ENCODE measurements at regions of chr18 and their contacts with region 1.

Region 1: GRCh38 chr18:3593904-3594661 is 144.1 kb downstream of the TGIF1 start:
- DNase-seq: peak; percentile 91
- H3K4me3 ChIP-seq: peak overlapping the region; percentile 64
- CTCF ChIP-seq: peak; percentile 89

Region 2: GRCh38 chr18:3037423-3037915 is 556.6 kb before region 1 on chr18:
- CTCF ChIA-PET with region 1: no interaction called
- POLR2A ChIA-PET with region 1: no interaction called
- DNase-seq: no peak
- H3K4me3 ChIP-seq: no peak overlapping the region
- CTCF ChIP-seq: no peak

Region 3: DNA sequence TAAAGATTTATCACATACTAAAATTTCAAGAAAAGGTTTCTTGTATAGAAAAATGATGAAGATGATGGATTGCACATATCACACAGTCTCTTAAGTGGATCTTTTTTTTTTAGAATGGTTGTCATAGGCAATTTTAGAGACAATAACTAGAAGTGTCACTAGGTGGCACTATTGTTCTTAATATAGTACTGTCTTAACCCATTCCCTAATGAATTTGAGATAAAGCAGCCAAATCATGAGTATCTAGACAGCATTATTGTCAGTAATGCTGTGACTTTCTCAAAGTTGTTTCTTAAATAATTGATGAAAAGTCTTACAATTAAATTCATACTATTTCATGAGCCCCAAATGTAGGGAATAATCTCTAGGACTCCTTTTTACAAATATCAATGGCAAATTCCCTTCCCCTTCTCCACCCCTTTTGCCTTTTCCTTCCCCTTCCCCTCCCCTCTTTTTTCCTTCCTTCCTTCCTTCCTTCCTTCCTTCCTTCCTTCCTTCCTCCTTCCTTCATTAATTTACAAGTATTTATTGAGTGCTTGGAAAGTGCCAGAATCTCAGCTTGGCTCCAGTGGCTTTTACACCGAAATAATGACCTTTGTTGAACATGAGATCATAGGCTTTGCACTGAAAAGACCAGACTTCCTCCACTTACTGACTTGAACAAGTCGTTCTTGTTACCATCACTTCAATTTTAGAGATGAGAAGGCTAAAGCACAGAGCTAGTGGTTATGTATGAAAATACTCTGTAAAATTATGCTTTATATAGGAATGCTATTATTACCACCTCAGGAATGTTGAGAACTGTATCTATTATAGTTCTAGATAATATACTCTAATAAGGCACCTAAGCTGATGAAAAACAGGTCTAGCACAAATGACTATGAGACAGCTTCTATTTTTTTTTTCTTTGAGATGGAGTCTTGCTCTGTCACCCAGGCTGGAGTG is 312.4 kb before region 1 on chr18:
- CTCF ChIA-PET with region 1: interaction called, 18 read pairs
- POLR2A ChIA-PET with region 1: interaction called, 3 read pairs
- DNase-seq: no peak
- H3K4me3 ChIP-seq: no peak overlapping the region
- CTCF ChIP-seq: peak; percentile 31

Region 4: DNA sequence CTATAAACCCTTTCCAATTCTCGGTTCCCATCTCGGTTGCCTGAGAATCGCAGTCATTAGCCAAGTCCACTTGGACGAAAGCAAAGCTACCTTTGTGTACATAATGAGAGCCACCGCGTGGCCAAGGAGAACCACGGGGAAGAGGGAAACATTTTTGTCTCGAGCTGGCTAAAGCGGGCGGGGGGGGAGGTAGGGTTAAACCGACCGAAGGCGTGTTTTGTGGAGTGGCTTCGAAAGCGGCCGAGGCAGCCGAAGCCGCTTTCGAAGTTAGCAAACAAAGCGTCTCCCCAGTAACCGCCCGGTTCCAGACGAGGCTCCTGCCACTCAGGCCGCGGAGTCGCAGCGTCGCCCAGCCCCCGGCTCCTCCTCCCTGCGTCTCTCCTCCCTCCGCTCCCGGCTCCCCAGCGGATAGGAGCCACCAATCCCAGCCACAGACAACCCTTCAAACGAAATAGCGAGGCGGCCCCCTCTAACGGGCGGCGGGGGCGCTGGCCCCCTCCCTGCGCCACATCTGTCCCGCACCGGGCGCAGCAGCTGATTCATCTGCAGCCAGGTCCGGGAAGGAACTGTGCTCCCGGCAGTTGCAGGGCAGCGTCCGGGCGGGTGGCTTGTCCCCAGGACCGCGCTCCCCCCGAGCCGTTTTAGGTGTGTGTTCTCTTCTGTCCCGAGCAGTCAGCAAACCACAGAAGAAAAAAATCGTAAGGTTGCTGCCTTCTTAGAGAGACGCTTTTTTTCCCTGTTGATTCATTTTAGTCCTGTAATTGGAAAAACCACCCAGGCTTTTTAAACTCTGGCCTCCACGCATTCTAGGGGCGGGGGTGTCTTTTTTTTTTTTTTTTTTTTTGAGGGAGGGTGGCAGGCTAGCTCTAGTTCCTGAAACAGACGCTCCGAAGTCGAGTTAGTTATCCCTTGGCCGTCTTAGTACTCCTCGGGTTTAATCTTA is 145.9 kb before region 1 on chr18:
- CTCF ChIA-PET with region 1: interaction called, 78 read pairs
- POLR2A ChIA-PET with region 1: interaction called, 34 read pairs
- DNase-seq: no peak
- H3K4me3 ChIP-seq: peak overlapping the region; percentile 81
- CTCF ChIP-seq: peak; percentile 26

Region 5: GRCh38 chr18:3454365-3455089 is 139.6 kb before region 1 on chr18:
- CTCF ChIA-PET with region 1: interaction called, 78 read pairs
- POLR2A ChIA-PET with region 1: interaction called, 34 read pairs
- DNase-seq: no peak
- H3K4me3 ChIP-seq: peak overlapping the region; percentile 81
- CTCF ChIP-seq: peak; percentile 49

Region 6: DNA sequence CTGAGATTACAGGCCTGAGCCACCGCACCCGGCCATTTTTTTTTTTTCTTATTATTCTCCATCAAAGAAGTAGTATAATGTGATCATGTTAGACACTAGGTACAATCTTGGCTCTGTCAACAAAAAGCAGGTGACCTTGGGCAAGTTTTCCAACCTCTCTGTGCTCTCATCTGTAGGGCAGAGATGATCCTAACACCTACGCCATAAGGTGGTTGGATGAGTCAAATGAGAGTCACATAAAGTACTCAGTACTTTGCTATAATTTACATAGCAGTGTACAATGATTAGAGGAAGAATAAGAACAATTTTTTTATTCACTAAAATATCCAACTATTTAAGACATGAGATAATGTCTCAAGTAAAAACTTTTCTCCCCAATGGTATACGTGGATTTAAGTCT is 15.5 kb before region 1 on chr18:
- CTCF ChIA-PET with region 1: interaction called, 49 read pairs
- POLR2A ChIA-PET with region 1: interaction called, 3 read pairs
- DNase-seq: no peak
- H3K4me3 ChIP-seq: no peak overlapping the region
- CTCF ChIP-seq: no peak

Region 7: GRCh38 chr18:3604498-3605408 is 10.7 kb after region 1 on chr18:
- CTCF ChIA-PET with region 1: interaction called, 22 read pairs
- POLR2A ChIA-PET with region 1: interaction called, 16 read pairs
- DNase-seq: peak; percentile 98
- H3K4me3 ChIP-seq: peak overlapping the region; percentile 56
- CTCF ChIP-seq: no peak